Breast epithelium (tissue), 4 donors: ENCODE measurements at regions of chr5 and their contacts with region 1.

Region 1: DNA sequence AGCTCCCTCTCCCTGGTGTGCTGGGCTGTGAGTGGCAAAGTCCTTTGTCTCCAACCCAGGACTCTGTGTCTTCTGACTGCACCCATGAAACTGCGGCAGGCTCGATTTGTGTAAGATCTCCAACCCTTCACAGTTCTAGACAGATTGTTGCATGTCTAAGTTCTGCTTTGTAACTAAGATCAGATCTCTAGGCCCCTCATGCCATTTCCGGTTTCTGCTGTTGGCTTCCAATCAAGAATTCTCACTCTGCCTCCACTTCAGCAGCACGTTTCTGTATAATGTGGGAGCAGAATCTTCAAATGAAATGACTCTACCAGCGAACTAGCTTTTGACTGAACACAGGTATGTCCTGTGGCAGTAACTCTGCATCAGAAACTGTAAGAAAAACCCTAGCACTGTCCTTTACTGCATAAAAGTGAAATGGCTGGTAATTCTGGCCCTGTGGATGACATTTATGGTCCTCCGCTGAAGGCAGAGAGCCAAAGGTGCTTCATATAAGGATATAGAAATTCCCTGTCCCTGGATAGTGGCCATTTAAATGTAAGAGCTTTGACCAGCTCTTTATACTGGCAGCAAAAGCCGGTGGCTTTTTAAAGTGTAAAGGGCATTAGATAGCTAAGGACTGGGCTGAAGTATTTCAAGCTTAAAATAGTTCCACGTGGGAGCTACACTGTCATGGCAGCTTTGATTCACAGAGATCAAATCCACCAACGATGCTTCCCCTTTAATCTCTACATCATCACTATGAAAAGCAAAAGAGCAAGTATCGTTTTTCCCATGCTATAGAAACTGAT is 319.0 kb upstream of the CDH6 start:
- DNase-seq: no peak
- H3K4me3 ChIP-seq: no peak overlapping the region
- H3K27ac ChIP-seq: no peak overlapping the region
- H3K4me1 ChIP-seq: no peaks in the 10 kb centered on the region
- H3K27me3 ChIP-seq: no peaks in the 10 kb centered on the region
- CTCF ChIP-seq: no peak
- POLR2A ChIP-seq: no peak

Region 2: DNA sequence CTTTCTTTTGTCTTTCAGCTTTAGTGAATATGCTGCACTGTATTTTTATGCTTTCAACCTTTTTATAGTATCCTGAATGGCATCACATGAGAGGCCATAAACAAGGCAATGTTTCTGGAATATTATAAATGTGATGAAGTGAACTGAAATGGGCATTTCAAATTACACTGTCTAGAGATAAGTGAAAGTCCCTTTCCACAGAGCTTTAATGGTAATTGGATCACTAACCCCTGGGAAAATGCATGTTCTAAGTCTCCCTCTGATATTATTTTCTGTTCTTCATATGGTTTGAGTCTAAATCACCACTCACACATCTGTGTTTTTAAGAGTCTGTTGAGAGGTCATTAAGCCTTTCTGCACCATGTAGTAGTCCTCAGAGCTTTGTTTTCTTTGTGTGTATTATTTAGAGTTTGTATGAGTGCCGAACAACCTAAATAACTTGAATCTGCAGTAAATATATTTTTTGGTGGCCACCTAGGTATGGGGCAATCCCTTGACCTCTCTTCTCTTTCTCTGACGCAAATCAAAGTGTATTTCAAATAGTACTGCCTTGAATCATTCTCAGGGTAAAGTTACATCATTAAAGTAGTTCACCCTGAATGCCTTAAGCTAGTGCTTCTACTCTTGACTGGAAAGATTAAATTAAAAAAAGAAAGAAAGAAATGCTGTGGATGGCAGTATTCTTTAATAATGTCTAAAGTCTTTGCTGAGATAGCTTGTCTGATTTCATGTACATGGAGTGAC is 1611.9 kb before region 1 on chr5:
- intact Hi-C with region 1: loop called (anchors 5 kb)
- DNase-seq: no peak
- H3K4me3 ChIP-seq: no peak overlapping the region
- H3K27ac ChIP-seq: no peak overlapping the region
- H3K4me1 ChIP-seq: no peaks in the 10 kb centered on the region
- H3K27me3 ChIP-seq: no peaks in the 10 kb centered on the region
- CTCF ChIP-seq: no peak
- POLR2A ChIP-seq: no peak

Region 3: DNA sequence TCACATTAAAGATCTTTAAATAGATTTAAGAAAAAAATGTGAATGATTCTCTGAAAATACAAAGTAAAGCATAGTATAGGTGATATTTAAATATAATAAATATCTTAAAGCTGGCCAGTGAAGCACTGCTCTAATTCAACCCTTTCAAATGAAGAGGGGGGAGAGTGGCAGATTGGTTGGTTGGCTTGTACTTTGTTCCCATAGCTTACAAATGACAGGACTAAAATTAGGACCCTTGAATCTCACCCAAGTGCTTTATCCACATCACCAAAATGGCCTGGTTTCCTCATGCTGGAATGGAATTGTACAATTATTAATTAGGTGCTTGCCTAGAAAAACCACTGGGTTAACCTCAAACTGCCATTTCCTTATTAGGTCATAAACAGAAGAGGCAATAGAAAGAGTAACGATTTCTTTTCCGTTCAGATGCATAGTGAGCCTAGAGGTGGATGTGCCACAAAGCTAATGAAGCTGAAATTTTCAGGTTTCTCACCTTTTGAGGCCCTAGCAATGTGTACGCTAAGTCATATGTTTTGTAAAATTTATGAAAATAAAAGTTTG is 35.4 kb before region 1 on chr5:
- intact Hi-C with region 1: no loop called
- DNase-seq: no peak
- H3K4me3 ChIP-seq: no peak overlapping the region
- H3K27ac ChIP-seq: no peak overlapping the region
- H3K4me1 ChIP-seq: no peaks in the 10 kb centered on the region
- H3K27me3 ChIP-seq: no peaks in the 10 kb centered on the region
- CTCF ChIP-seq: no peak
- POLR2A ChIP-seq: no peak

Region 4: DNA sequence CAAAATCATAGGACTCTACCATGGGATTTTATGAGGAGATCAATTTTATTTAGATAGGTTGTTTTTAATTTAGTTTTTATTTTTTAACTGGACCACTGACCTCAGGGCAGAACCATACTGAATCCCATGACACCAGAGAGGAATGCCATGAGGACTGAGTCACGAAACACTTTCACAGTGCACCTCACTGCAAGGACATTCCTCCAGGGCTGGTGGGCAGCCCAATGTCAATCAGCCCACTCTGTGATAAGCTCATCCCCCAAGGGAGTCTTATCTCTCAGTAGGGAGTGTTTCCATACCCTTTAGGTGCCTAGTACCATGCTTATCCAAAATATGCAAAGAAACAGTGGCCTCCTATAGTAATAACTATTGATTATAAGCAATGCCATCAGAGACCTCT is 94.5 kb after region 1 on chr5:
- intact Hi-C with region 1: no loop called
- DNase-seq: no peak
- H3K4me3 ChIP-seq: no peak overlapping the region
- H3K27ac ChIP-seq: no peak overlapping the region
- H3K4me1 ChIP-seq: no peaks in the 10 kb centered on the region
- H3K27me3 ChIP-seq: no peaks in the 10 kb centered on the region
- CTCF ChIP-seq: no peak
- POLR2A ChIP-seq: no peak